GM23248 (cell line): ENCODE measurements at regions of chr15 and their contacts with region 1.

Region 1: GRCh38 chr15:97909291-97909891 is 51.1 kb upstream of the ARRDC4 start:
- DNase-seq: peak; percentile 71
- H3K4me3 ChIP-seq: no peak overlapping the region
- H3K27ac ChIP-seq: no peak overlapping the region
- H3K4me1 ChIP-seq: no peaks in the 10 kb centered on the region
- H3K27me3 ChIP-seq: peaks cover 3% of the 10 kb centered on the region; the same call in 1 of the 2 replicates

Region 2: GRCh38 chr15:98000249-98001196 is 91.1 kb after region 1 on chr15:
- in situ Hi-C with region 1: no loop called
- DNase-seq: peak; percentile 36
- H3K4me3 ChIP-seq: no peak overlapping the region
- H3K27ac ChIP-seq: no peak overlapping the region
- H3K4me1 ChIP-seq: no peaks in the 10 kb centered on the region
- H3K27me3 ChIP-seq: no peaks in the 10 kb centered on the region

Region 3: DNA sequence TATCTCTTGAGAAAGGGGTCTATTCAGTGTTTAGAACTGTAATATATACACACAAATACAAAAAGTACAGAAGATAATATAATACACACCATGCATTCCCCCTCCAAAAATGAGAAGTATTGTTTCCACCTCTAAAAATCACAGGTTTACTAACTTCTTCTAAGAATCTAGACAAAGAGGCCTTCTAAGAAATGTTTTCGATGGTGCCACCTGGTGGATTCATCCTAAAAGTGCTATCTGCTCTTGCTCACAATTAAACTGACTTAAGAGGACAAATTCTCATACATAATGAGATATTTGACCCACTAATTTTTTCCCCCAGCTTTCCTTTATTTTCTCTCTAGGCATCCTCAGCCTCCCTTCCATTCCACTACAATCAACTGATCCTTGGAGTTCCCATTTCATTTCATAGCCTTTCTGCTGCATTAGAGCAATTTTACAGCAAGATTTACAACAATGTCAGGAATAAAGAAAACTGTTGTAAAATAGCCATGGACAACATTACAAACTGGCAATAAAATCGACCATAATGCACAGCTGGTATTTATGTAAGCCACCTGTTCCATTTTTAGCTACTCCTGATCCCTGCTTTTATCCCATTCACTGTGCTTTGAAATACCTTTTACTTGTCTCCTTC is 175.7 kb after region 1 on chr15:
- in situ Hi-C with region 1: loop called (anchors 10 kb)
- DNase-seq: peak; percentile 72
- H3K4me3 ChIP-seq: no peak overlapping the region
- H3K27ac ChIP-seq: no peak overlapping the region
- H3K4me1 ChIP-seq: no peaks in the 10 kb centered on the region
- H3K27me3 ChIP-seq: no peaks in the 10 kb centered on the region

Region 4: DNA sequence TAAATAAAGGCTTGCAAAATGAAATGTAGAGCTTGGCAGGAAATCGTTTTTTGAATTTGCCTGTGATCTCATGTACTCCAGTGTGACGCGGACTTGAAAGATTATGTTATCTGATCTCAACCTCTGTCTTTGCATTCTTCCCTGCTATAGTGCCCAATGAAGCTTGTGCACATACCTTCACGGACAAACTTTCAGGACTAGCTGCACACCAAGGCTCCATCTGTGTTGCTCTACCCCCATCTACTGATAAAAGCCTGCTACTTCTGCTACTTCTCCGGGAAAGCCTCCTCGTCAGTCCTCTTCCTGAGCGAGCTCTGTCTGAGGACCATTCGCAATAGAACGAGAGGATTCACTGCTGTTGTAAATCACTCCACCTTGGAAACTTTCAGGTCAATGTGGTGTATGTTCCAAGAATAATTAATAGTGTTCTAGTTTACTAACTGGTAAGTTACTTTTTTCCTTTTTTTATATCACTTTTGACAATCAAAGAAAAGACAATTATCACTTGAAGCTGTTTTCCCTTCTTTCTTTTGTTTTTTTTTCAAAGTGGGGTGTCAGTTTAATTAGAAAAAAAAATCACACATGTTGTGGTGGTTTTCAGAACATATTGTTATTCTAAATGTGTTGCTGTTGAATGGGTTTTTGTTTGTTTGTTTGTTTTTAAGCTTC is 268.7 kb after region 1 on chr15:
- in situ Hi-C with region 1: loop called (anchors 5 kb)
- DNase-seq: peak; percentile 82
- H3K4me3 ChIP-seq: no peak overlapping the region
- H3K27ac ChIP-seq: no peak overlapping the region
- H3K4me1 ChIP-seq: no peaks in the 10 kb centered on the region
- H3K27me3 ChIP-seq: peaks cover 15% of the 10 kb centered on the region; the same call in 1 of the 2 replicates

Region 5: GRCh38 chr15:98647774-98648653 is 738.6 kb after region 1 on chr15 and contains the start of gene IGF1R:
- in situ Hi-C with region 1: no loop called
- DNase-seq: peak; percentile 95
- H3K4me3 ChIP-seq: peak within 1 kb of the TSS; percentile 90
- H3K27ac ChIP-seq: peak within 1 kb of the TSS; percentile 86
- H3K4me1 ChIP-seq: peaks cover 13% of the 10 kb centered on the region
- H3K27me3 ChIP-seq: peaks cover 31% of the 10 kb centered on the region
- total RNA-seq, gene IGF1R: 23.6 and 48.6 TPM in 2 replicates